HAP-1 (cell line): ENCODE measurements at regions of chr16 and their contacts with region 1.

Region 1: DNA sequence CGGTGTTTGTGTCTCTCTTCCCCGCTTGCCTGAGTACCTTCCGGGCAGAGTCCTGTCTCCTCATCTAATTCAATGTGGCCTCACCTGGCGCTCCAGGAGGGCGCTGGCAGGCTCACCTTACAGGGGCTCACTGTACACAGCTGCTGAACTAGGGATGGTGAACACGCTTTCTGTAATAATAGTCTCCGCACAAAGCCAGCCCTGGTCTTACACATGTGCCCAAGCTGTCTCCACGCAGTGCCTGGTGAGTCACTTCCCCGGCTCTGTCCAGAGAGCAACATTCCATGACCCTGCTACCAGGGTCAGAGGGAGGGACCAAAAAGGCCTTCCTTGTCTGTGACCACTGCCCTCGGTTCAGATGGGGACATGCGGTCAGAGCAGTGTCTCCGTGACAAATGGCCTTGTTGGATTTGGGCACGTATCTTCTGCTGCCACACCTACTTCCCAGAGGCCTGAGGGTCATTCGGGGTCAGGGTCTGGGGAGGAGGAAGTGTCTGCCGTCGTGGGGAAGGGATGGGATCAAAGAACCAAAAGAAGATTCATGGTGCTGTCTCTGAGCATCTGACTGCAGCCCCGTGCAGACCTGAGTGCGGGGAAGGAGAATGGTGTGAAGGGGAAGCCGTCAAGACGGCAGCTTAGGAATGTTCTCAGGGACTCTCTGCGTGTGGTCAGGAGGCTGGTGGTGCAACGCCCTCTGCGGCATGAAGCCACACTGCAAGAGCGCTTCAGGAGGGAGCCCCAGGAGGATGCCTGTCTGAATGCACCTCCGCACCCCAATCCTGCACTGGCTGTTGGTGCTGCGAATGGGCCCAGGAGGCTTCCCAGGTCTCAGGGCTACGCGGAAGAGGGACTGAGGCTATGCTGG is 68.8 kb downstream of the IL21R start:
- DNase-seq: no peak
- H3K4me3 ChIP-seq: no peak overlapping the region
- H3K4me1 ChIP-seq: no peaks in the 10 kb centered on the region
- H3K27me3 ChIP-seq: no peaks in the 10 kb centered on the region

Region 2: DNA sequence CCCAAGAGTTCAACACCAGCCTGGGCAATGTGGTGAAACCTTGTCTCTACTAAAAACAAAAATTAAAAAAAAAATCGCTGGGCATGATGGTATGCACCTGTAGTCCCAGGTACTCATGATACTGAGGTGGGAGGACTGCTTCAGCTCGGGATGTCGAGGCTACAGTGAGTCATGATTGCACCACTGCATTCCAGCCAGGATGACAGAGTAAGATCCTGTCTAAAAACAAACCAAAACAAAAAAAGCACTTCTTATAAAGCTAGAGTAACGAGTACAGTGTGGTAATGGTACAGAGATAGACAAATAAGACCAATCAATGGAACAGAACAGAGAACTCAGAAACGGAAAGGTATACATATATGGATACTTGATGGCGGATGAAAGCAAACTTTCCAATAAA is 206.6 kb before region 1 on chr16:
- in situ Hi-C with region 1: no loop called
- DNase-seq: no peak
- H3K4me3 ChIP-seq: no peak overlapping the region
- H3K4me1 ChIP-seq: peaks cover 14% of the 10 kb centered on the region
- H3K27me3 ChIP-seq: no peaks in the 10 kb centered on the region

Region 3: DNA sequence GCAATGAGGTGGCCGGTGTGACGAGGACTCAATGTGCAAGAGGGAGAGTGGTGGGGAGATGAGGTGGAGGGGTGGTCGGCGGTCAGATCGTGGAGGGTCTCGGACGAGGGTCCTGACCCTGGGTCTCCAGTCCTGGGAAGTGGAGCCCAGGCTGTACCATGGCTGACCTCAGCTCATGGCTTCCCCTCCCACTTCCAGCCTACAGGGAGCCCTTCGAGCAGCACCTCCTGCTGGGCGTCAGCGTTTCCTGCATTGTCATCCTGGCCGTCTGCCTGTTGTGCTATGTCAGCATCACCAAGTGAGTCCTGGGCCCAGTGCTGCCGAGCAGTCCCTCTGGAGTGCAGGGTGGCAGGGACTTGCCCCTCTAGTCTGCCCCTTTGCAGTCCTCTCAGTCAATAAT is 115.2 kb before region 1 on chr16:
- in situ Hi-C with region 1: no loop called
- DNase-seq: peak in 1 of 2 experiments; percentile 50
- H3K4me3 ChIP-seq: no peak overlapping the region
- H3K4me1 ChIP-seq: no peaks in the 10 kb centered on the region
- H3K27me3 ChIP-seq: no peaks in the 10 kb centered on the region

Region 4: DNA sequence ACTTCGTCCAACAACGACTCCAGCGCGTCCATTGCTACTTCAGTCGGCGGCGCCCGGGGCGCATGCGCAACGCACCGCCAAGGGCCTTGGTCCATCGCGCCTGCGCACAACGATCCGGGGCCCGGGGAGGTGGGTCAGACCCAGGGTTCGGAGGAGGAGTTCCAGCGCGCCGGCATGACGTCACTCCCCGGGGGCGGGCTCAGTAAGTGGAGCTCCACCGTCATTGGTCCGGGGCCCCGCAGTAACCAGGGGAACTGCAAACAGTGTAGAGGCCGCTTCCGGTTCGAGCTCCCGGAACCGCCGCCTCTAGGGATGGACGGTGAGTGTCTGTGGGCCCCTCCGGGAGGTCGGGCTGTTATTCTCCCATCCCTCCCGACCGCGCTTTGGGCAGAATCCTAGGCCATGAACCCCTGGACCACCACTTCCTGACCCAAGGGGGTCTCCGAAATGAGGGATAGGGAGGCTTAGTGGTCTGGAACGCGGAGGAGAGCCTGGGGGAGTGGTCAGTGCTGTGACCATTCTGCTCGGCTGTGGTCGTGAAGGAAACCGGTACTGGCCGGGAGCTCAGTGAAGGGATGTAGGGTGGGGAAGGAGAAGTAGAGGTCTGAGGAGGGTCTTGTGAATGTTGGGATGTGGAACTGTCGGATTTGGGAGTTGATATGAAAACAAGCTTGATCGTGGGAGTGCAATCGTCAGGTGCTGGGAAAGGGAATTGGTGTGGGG is 79.2 kb after region 1 on chr16 and contains the starts of genes GTF3C1 and KATNIP:
- in situ Hi-C with region 1: loop called (anchors 10 kb)
- DNase-seq: peak; percentile 91 to 100
- H3K4me3 ChIP-seq: peak within 1 kb of the TSS; percentile 98
- H3K4me1 ChIP-seq: no peaks in the 10 kb centered on the region; the same call in 1 of the 2 replicates
- H3K27me3 ChIP-seq: no peaks in the 10 kb centered on the region

Region 5: DNA sequence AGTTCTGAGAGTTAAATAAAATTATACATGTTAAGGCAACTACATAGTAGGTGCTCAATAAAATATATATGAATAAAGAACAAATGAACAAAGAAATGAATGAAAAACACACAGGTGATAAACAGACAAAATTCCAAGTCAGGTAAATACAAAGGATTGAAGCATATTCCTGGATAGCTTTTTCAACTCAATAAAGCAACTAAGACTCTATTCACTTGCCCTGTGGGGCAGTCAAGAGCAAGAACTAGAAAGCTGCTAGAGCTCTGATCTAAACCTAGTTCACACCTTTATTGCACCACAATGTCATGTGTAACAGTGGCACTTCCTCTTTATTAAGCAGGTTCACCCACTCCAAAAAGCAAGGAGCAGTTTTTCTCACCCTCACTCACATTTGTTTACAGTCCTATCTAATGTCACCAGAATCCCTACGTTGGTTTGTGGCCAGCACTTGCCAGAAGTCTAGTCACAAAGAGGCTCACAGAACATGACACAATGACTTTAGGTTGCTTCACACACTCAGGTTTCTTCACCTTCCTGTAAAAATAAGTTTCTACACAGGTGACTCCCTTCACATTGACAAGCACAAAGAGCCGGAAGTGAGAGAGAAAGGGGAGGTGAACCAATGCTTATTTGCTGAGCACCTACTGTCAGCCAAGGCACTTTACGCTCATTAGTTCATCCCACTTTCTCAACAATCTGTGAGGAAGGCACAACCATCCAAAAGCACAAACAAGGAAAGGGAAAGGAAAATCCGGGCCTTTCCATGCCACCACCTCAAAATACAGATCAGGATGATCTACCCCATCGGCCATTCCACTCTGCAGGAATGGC is 670.2 kb after region 1 on chr16:
- in situ Hi-C with region 1: loop called (anchors 25 kb)
- DNase-seq: no peak
- H3K4me3 ChIP-seq: no peak overlapping the region
- H3K4me1 ChIP-seq: no peaks in the 10 kb centered on the region
- H3K27me3 ChIP-seq: no peaks in the 10 kb centered on the region